AG04449 (cell line): ENCODE measurements at regions of chr17 and their contacts with region 1.

Region 1: DNA sequence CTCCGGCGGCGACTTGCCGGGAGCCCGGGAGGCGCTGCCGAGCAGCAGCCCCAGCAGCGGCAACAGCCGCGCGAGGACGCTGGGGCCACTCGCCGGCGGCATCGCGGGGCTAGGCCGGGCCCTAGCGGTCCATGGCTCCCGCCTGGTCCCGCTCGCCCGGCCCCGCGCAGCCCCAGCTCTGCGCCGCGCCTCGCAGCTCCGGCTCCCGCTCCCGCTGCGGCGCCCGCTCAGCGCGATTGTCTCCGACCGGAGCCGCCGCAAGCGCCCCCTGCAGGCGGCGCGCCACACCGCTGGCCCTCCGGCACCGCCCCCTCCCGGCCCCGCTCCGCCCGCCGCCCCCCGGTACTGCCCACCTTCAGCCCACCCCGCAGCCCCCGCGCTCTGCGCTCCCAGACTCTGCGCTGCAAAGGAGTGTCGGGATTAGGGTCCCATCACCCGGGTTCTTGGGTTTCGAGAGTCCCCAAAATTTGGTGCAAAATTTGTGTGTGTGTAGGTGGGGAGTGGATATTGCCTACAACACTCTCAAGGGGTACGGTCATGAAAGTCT is at the start of gene FAM171A2:
- DNase-seq: no peak
- H3K4me3 ChIP-seq: peak within 1 kb of the TSS; percentile 70
- CTCF ChIP-seq: peak; percentile 64

Region 2: GRCh38 chr17:44344939-44345453 is 18.7 kb before region 1 on chr17 and contains the start of gene GRN:
- CTCF ChIA-PET with region 1: interaction called, 165 read pairs
- POLR2A ChIA-PET with region 1: interaction called, 3 read pairs
- DNase-seq: peak; percentile 93
- H3K4me3 ChIP-seq: peak within 1 kb of the TSS; percentile 95
- CTCF ChIP-seq: no peak

Region 3: GRCh38 chr17:44350733-44351226 is 12.9 kb before region 1 on chr17:
- CTCF ChIA-PET with region 1: interaction called, 165 read pairs
- POLR2A ChIA-PET with region 1: no interaction called
- DNase-seq: no peak
- H3K4me3 ChIP-seq: no peak overlapping the region
- CTCF ChIP-seq: peak; percentile 87

Region 4: DNA sequence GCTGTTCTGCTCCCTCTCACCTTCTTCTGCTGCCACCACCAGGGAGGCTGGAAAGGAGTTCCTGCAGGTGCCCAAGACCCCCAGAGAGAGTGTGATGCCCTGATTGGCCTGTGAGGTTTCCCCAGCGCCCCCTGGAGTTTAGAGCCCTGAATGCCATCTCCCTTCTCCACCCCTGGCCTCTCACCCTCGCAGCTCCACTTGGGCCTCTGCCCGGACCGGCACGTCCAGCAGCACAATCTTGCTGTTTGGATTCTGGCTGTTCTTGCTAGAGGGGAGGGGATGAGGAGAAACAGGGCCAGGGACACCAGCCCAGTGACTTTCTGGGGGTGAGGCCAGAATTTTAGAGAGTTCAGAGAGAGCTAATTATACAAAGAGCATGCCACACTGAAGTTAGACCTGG is 12.4 kb after region 1 on chr17:
- CTCF ChIA-PET with region 1: interaction called, 24 read pairs
- POLR2A ChIA-PET with region 1: no interaction called
- DNase-seq: no peak
- H3K4me3 ChIP-seq: no peak overlapping the region
- CTCF ChIP-seq: peak; percentile 38

Region 5: GRCh38 chr17:44385287-44386181 is 21.8 kb after region 1 on chr17:
- CTCF ChIA-PET with region 1: interaction called, 18 read pairs
- POLR2A ChIA-PET with region 1: no interaction called
- DNase-seq: no peak
- H3K4me3 ChIP-seq: peak overlapping the region; percentile 62
- CTCF ChIP-seq: no peak